GM10248 (cell line): ENCODE measurements at regions of chr15 and their contacts with region 1.

Region 1: GRCh38 chr15:65638681-65639089 is 16.9 kb downstream of the SLC24A1 start:
- DNase-seq: peak; percentile 73
- CTCF ChIP-seq: peak; percentile 80

Region 2: DNA sequence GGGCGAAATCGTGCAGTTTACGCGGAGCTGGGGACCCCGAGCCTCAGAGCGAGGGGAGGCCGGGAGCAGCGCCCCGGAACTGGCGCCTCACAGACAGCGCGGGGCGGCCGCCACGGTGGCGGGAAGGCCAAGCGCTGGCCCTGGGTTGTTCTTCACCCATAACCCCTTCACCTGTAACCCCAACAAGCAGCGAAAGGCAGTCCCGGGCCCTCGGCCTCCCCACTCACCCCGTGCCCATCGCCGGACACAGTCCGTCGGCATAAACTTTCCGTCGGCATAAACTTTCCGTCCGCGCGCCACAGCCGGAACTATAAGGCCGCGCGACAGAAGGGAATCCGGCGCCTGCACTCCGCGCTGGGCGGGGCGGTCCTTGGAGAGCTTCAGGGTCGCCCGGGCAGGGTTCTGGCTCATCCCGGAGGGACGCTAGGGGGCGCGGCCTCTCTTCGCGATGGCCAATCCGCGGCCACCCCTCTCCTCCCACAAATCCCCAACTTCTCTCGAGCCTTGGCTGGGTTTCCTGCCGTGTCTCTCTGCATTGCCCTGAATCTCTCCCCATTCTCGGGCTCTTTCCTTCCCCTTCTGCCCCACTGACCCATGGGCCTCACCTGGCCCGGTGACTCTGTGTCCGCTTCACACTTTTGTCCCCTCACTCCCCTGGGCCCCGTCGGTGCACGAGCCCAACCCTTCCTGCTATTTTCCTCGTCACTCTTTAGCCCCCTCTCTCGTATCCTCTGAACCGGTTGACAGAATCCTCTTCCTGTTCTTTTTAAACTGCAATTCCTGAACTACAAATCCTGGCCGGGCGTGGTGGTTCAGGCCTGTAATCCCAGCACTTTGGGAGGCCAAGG is 27.6 kb before region 1 on chr15 and contains the start of gene INTS14:
- CTCF ChIA-PET with region 1: interaction called, 12 read pairs
- POLR2A ChIA-PET with region 1: no interaction called
- DNase-seq: peak; percentile 97
- CTCF ChIP-seq: peak; percentile 69

Region 3: DNA sequence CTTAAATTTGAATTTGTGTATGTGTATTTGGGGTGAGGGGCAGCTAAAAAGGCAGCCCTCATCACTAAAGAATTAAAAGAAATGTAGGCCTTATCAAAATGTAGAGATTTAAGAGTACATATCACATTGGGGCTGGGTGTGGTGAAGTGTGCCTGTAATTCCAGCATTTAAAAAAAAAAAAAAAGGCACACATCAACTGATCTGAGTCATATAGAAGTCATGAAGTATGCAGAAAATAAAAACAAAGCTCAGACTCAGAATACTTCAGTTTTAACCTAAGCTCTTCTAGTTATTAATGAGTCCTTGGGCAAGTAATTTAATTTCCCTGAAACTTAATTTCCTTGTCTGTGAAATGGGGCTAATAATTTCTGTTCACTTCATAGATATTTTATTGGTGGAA is 14.7 kb after region 1 on chr15:
- CTCF ChIA-PET with region 1: interaction called, 57 read pairs
- POLR2A ChIA-PET with region 1: no interaction called
- DNase-seq: no peak
- CTCF ChIP-seq: no peak

Region 4: DNA sequence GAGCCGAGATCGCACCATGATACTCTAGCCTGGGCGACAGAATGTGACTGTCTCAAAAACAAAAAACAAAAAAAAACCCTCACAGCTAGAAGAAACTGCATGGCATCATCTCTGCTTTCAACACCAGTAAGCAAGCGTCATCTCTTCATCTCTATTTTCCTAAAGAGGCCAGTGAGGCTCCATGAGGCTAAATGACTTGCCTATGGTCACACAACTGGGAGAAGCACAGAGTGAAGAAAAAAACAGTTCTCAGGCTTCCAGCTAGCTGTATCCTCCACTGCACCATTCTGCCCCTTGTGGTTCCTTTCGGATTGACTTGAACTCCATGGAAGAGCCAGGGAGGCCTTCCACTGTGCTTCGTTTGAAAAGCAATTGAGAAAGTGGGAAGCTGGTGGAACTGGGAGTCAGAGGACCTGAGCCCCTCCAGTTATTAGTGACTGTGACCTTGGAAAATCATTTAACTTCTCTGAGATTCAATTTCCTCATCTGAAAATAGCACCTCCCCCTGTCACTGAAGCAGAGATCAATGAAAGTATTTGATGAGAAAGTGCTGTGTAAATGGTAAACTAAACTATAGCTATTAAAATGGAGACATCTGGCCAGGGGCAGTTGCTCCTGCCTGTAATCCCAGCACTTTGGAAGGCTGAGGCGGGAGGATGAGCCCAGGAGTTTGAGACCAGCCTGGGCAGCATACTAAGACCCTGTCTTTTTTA is 185.5 kb after region 1 on chr15:
- CTCF ChIA-PET with region 1: interaction called, 13 read pairs
- POLR2A ChIA-PET with region 1: no interaction called
- DNase-seq: no peak
- CTCF ChIP-seq: peak; percentile 59

Region 5: DNA sequence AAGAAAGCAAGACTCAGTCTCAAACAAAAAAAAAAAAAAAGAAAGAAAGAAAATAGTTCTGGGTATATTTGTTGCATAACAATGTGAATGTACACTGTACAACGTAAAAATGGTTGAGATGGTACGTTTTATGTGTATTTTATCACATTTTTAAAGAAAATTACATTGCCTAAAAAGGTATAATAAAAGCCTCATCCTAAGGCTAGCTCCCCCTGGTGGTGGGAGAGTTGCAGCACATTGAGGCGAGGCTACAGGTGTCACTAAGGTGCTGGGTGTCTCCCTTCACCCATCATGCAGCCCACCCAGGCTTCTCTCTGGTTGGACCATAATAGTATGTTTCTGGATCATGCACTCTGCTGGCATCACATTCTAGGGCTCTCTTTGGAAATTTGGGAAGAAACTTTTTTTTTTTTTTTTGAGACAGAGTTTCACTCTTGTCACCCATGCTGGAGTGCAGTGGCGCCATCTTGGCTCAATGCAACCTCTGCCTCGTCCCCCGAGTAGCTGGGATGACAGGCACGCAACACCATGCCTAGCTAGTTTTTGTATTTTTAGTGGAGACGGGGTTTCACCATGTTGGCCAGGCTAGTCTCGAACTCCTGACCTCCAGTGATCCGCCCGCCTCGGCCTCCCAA is 218.3 kb after region 1 on chr15:
- CTCF ChIA-PET with region 1: interaction called, 34 read pairs
- POLR2A ChIA-PET with region 1: no interaction called
- DNase-seq: peak; percentile 52
- CTCF ChIP-seq: peak; percentile 74

Region 6: DNA sequence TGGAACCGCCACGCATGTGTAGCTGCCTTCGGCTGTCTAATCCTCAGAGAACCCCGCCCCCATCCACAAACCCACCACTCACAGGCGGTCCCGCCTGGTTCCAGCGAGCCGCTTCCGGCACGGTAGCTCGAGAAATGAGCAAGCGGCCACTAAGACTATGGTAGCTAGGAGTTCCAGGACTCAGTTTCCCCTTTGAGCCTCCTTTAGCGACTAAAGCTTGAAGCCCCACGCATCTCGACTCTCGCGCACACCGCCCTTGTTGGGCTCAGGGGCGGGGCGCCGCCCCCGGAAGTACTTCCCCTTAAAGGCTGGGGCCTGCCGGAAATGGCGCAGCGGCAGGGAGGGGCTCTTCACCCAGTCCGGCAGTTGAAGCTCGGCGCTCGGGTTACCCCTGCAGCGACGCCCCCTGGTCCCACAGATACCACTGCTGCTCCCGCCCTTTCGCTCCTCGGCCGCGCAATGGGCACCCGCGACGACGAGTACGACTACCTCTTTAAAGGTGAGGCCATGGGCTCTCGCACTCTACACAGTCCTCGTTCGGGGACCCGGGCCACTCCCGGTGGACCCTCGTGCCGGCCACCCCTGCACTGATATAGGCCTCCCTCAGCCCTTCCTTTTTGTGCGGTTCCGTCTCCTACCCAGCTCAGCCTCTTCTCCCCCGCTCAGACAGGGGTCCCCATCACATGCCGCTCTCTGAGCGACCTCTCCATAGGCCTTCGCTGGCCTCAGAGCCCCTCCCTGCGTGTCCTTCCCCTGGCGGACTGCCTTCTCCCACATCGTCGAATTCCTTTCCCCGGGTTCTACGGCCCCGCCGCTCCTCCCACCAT is 230.7 kb after region 1 on chr15 and contains the start of gene RAB11A:
- CTCF ChIA-PET with region 1: interaction called, 11 read pairs
- POLR2A ChIA-PET with region 1: no interaction called
- DNase-seq: peak; percentile 96
- CTCF ChIP-seq: peak; percentile 47